ENCODE measurements at regions of chr9 and their contacts with region 1.

Region 1: DNA sequence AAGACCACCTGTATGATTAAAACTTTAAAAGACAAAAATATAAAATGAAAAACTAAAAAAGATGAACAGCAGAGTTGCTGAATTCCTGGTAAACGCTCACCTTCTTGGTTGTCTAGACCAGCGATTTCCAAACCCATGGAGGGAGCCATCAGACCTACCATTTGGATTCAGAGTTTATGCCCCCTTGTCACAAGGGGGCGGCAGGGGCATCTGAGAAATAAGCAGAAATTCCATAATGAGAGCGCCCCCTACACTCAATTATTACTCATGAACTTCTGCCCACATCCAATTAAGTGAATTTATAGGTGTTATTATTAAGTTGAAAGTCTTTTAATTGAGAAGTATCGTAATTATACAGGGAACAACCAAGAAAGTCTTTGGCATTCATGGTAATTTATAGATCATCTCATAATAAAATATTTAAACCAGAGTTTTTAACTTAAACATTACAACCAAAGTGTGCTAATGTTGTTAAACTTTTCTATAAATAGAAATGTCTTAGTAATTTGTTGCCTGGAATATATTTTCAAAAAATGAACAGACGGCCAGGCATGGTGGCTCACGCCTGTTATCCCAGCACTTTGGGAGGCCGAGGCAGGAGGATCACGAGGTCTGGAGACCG is 35.2 kb upstream of the SPATA31C2 start:
- DNase-seq: no peak

Region 2: GRCh38 chr9:88388172-88388885 is 214.8 kb after region 1 on chr9 and contains the start of gene SPIN1:
- intact Hi-C with region 1: loop called (anchors 5 kb)
- DNase-seq: peak; percentile 91
- total RNA-seq, gene SPIN1: 49.2 TPM